AG04449 (cell line): ENCODE measurements at regions of chr11 and their contacts with region 1.

Region 1: GRCh38 chr11:68257475-68258362 is 14.1 kb downstream of the C11orf24 start:
- DNase-seq: peak; percentile 59
- H3K4me3 ChIP-seq: no peak overlapping the region
- CTCF ChIP-seq: peak; percentile 85

Region 2: DNA sequence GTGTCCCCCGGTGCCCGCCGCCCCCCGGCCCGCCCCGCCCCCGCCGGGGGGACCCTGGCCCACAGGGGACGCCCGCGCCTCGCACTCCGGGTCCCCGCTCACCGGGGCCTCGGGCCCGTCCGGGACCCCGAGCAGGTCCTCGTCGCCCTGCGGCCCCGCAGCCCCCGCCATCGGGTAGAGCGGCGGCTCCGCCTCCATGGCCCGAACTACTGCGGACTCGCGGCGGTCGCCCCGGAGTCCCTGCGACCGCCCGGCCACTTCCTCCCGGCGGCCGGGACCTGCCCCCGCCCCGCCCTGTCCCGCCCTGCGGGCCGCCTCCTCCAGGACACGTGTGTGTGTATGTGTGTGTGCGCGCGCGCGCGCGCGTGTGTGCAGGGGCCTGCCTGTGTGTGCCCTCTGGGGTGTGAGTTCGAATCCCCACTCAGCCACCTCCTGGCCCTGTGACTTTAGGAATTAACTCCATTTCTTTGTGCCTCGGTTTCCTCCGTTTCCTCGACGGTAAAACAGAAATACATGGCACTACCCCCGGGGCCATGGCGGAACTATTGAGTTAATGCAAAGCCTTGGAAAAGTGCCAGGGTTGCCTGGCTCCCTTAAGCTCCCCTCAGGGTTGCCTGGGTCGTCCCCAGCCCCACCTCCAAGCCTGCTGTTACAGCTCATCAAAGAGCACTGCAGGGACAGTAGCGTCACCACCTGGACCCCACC is 253.7 kb before region 1 on chr11 and contains the start of gene UNC93B1:
- CTCF ChIA-PET with region 1: no interaction called
- POLR2A ChIA-PET with region 1: no interaction called
- DNase-seq: no peak
- H3K4me3 ChIP-seq: peak within 1 kb of the TSS; percentile 69
- CTCF ChIP-seq: no peak

Region 3: GRCh38 chr11:68142028-68142412 is 115.7 kb before region 1 on chr11:
- CTCF ChIA-PET with region 1: no interaction called
- POLR2A ChIA-PET with region 1: no interaction called
- DNase-seq: no peak
- H3K4me3 ChIP-seq: no peak overlapping the region
- CTCF ChIP-seq: no peak

Region 4: GRCh38 chr11:68213555-68214174 is 44.1 kb before region 1 on chr11:
- CTCF ChIA-PET with region 1: interaction called, 15 read pairs
- POLR2A ChIA-PET with region 1: interaction called, 3 read pairs
- DNase-seq: peak; percentile 87
- H3K4me3 ChIP-seq: peak overlapping the region; percentile 92
- CTCF ChIP-seq: no peak

Region 5: DNA sequence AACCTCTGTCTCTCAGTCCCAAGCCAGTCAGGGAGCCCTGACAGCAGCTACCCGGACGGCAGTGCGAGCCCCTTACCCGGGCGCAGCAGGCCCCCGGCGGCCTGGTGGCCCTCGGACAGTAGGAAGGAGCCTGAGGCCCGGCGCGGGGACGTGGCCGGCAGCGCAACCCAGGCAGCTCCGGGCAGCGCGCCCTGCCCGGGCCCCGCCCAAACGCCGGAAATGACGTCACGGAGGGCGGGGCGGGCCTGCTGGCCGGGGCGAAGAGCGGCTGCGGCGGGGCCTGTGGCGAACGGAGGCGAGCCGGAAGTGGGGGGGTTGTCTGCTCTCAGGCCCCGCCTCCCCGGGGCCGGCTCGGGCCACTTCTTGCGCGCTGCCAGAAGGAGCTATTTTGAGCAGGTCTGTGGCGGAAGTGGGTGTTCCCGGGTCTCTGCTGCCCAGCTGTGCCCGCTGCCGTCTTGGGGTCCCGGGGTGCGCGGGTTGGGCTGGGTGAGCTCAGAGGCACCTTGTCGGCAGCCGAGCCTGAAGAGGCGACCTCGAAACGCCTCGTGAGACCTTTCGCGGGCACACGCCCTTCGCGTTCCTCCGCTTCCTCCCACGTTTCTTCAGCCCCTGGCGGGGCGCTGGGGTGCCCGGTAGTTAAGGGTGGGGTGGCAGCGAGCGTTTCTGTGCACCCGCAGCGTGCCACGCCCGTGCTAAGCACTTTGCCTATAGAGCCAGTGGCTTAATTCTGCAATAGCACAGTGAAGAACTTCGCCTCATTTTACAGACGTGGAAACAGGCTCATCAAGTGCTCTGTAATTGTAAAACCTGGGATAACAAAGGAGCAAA is 14.3 kb after region 1 on chr11 and contains the start of gene C11orf24:
- CTCF ChIA-PET with region 1: interaction called, 124 read pairs
- POLR2A ChIA-PET with region 1: interaction called, 39 read pairs
- DNase-seq: peak; percentile 53
- H3K4me3 ChIP-seq: peak within 1 kb of the TSS; percentile 95
- CTCF ChIP-seq: no peak

Region 6: GRCh38 chr11:68383976-68384501 is 126.3 kb after region 1 on chr11:
- CTCF ChIA-PET with region 1: interaction called, 68 read pairs
- POLR2A ChIA-PET with region 1: interaction called, 5 read pairs
- DNase-seq: no peak
- H3K4me3 ChIP-seq: no peak overlapping the region
- CTCF ChIP-seq: peak; percentile 91

Region 7: GRCh38 chr11:68448604-68449011 is 190.9 kb after region 1 on chr11:
- CTCF ChIA-PET with region 1: interaction called, 10 read pairs
- POLR2A ChIA-PET with region 1: no interaction called
- DNase-seq: no peak
- H3K4me3 ChIP-seq: no peak overlapping the region
- CTCF ChIP-seq: no peak